KBM-7 (cell line): ENCODE measurements at regions of chr10 and their contacts with region 1.

Region 1: GRCh38 chr10:89217057-89217990 is 10.2 kb upstream of the CH25H start:
- DNase-seq: peak; percentile 75

Region 2: GRCh38 chr10:88693392-88694020 is 523.8 kb before region 1 on chr10:
- in situ Hi-C with region 1: no loop called
- DNase-seq: no peak

Region 3: DNA sequence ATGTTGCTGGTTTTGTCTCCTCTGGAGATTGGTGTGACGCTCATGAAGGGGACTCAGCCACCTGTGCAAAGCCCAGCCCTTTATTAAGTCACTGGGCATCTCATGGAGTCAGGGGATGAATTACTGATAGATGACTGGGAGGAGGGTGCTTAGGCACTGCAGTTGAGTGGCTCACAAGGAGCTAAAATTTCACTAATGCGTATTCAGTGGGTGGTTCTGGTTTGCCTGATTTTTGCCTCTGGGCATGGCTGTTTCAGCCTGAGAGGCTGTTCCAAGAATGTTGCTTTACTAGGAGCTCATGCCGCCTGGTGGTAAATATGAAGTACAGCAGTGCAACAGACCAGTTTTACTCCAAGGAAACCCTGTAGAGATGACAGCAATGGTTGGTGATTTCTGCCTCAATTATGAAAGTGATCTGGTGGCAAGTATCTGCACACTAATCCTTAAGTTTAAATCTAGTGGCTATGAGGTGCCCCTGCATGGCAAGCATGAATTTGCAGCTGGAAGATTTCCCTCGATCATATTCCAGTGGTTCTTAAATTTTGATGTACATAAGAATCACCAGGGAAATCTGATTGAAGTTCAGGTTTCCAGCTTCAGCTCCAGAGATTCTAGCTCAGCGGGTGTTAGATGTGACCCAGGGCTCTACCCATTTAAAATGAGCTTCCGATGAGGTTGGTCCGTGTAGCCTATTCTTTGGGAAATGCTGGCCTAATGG is 284.6 kb before region 1 on chr10:
- in situ Hi-C with region 1: loop called (anchors 25 kb)
- DNase-seq: peak; percentile 69

Region 4: DNA sequence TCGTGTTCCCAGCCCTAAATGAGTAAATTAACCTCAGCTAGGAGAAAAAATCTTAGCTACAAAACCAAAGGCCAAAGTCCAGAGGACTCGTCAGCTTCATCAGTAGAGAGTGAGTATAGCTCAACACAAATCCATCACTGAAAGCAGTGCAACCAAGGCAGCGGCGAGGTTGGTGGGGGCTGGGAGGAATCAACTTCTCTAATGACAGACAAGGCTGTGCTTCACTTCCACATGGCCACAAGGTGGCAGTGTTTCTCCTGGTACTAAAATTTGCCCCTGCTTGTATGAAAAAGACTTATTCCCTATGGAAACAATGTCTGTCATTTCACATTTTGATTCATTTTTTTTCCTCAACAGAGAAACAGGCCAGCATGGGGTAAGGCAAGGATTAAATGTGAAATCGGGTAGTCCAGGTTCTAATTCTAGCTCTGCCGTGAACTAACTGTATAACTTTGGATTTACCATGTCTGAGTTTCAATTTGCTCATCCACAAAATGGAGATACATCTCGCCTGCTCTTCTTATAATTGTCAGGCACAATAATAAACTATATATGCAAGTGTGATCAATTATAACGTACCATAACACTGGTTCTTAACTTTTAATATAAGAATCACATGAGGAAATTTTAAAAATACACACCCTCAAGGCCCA is 187.4 kb before region 1 on chr10:
- in situ Hi-C with region 1: loop called (anchors 25 kb)
- DNase-seq: peak; percentile 81

Region 5: DNA sequence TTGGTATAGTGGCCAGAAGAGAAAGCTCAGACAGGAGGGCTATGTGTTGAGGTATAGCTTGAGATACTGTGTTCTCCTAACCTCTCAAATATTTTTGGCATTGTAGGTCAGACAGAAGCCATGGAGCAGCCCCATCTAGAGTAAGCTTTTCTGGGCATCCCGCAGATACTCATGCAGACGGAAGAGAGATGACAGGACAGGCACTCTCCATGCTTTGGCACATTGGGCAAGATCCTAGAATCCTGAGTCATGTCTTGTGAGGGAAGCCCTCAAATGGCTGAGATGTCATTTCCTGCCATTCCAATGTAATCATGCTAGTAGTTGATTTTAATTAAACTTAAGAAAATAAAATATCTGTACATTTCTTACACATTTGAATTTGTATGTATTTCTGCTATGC is 467.3 kb after region 1 on chr10:
- in situ Hi-C with region 1: no loop called
- DNase-seq: no peak